H1 (cell line): ENCODE measurements at regions of chr1 and their contacts with region 1.

Region 1: GRCh38 chr1:12124693-12125421 is 41.9 kb upstream of the TNFRSF1B start:
- DNase-seq: peak; percentile 41 to 91
- H3K4me3 ChIP-seq: no peak overlapping the region
- H3K27ac ChIP-seq: no peak overlapping the region
- H3K4me1 ChIP-seq: no peaks in the 10 kb centered on the region
- H3K27me3 ChIP-seq: no peaks in the 10 kb centered on the region
- CTCF ChIP-seq: peak; percentile 78 to 97 (median 89)
- EP300 ChIP-seq: no peak
- POLR2A ChIP-seq: no peak
- RAD21 ChIP-seq: peak; percentile 96 to 97

Region 2: GRCh38 chr1:12107736-12108135 is 17.1 kb before region 1 on chr1:
- CTCF ChIA-PET with region 1: interaction called, 61 read pairs
- POLR2A ChIA-PET with region 1: no interaction called
- DNase-seq: no peak
- H3K4me3 ChIP-seq: no peak overlapping the region
- H3K27ac ChIP-seq: no peak overlapping the region
- H3K4me1 ChIP-seq: no peaks in the 10 kb centered on the region
- H3K27me3 ChIP-seq: no peaks in the 10 kb centered on the region
- CTCF ChIP-seq: no peak
- EP300 ChIP-seq: no peak
- POLR2A ChIP-seq: no peak
- RAD21 ChIP-seq: no peak

Region 3: GRCh38 chr1:12142891-12143630 is 18.2 kb after region 1 on chr1:
- CTCF ChIA-PET with region 1: interaction called, 79 read pairs
- POLR2A ChIA-PET with region 1: interaction called, 8 read pairs
- DNase-seq: no peak
- H3K4me3 ChIP-seq: no peak overlapping the region
- H3K27ac ChIP-seq: no peak overlapping the region
- H3K4me1 ChIP-seq: peaks cover 0 to 5% (median 3%) of the 10 kb centered on the region in 4 experiments; a peak in 5 of 7 replicates
- H3K27me3 ChIP-seq: no peaks in the 10 kb centered on the region
- CTCF ChIP-seq: no peak
- EP300 ChIP-seq: no peak
- POLR2A ChIP-seq: no peak
- RAD21 ChIP-seq: no peak

Region 4: GRCh38 chr1:12166834-12167492 is 42.1 kb after region 1 on chr1 and contains the start of gene TNFRSF1B:
- CTCF ChIA-PET with region 1: interaction called, 23 read pairs
- POLR2A ChIA-PET with region 1: interaction called, 3 read pairs
- DNase-seq: peak in 1 of 2 experiments; percentile 85
- H3K4me3 ChIP-seq: peak within 1 kb of the TSS; percentile 5 to 55 (median 21); a peak in 5 of 8 replicates
- H3K27ac ChIP-seq: no peak within 1 kb of the TSS
- H3K4me1 ChIP-seq: peaks cover 0 to 10% (median 5%) of the 10 kb centered on the region in 4 experiments; a peak in 5 of 7 replicates
- H3K27me3 ChIP-seq: peaks cover 3 to 41% (median 29%) of the 10 kb centered on the region in 4 experiments
- CTCF ChIP-seq: no peak
- EP300 ChIP-seq: no peak
- POLR2A ChIP-seq: peak in 1 of 2 experiments; percentile 43; a peak in 1 of 3 replicates
- RAD21 ChIP-seq: no peak
- total RNA-seq, gene TNFRSF1B: 2.8 and 2.9 TPM in 2 replicates

Region 5: DNA sequence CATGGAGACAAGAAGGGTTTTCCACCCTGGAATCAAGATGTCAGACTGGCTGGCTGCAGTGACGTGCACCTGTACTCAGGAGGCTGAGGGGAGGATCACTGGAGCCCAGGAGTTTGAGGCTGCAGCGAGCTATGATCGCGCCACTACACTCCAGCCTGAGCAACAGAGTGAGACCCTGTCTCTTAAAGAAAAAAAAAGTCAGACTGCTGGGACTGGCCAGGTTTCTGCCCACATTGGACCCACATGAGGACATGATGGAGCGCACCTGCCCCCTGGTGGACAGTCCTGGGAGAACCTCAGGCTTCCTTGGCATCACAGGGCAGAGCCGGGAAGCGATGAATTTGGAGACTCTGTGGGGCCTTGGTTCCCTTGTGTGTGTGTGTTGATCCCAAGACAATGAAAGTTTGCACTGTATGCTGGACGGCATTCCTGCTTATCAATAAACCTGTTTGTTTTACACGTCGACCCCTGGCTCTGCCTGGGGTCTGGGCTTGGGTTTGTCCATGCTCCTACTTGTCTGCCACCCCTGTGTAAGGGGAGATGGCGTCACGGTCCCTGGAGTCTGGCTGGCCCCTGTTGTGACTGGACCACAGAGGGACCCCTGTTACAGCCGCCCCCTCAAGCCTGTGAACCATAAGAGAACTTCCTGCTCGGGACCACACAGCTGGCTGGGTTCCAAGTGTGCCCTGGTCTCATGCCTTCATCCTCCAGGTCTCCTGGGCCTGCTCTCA is 84.1 kb after region 1 on chr1:
- CTCF ChIA-PET with region 1: interaction called, 503 read pairs
- POLR2A ChIA-PET with region 1: interaction called, 3 read pairs
- DNase-seq: peak; percentile 82 to 99
- H3K4me3 ChIP-seq: no peak overlapping the region
- H3K27ac ChIP-seq: no peak overlapping the region
- H3K4me1 ChIP-seq: peaks cover 3 to 6% (median 4%) of the 10 kb centered on the region in 4 experiments; a peak in 6 of 7 replicates
- H3K27me3 ChIP-seq: no peaks in the 10 kb centered on the region
- CTCF ChIP-seq: peak; percentile 94 to 98 (median 94)
- EP300 ChIP-seq: no peak
- POLR2A ChIP-seq: no peak
- RAD21 ChIP-seq: peak; percentile 97

Region 6: GRCh38 chr1:12244078-12244477 is 119.2 kb after region 1 on chr1:
- CTCF ChIA-PET with region 1: interaction called, 25 read pairs
- POLR2A ChIA-PET with region 1: no interaction called
- DNase-seq: peak in 1 of 2 experiments; percentile 46
- H3K4me3 ChIP-seq: no peak overlapping the region
- H3K27ac ChIP-seq: no peak overlapping the region
- H3K4me1 ChIP-seq: peaks cover 0 to 19% (median 6%) of the 10 kb centered on the region in 4 experiments; a peak in 5 of 7 replicates
- H3K27me3 ChIP-seq: no peaks in the 10 kb centered on the region
- CTCF ChIP-seq: peak in 2 of 3 experiments; percentile 49 to 63; a peak in 3 of 4 replicates
- EP300 ChIP-seq: no peak
- POLR2A ChIP-seq: no peak
- RAD21 ChIP-seq: peak; percentile 15 to 40; a peak in 2 of 4 replicates